Esophagus squamous epithelium (tissue), 5 donors: ENCODE measurements at regions of chr17 and their contacts with region 1.

Region 1: DNA sequence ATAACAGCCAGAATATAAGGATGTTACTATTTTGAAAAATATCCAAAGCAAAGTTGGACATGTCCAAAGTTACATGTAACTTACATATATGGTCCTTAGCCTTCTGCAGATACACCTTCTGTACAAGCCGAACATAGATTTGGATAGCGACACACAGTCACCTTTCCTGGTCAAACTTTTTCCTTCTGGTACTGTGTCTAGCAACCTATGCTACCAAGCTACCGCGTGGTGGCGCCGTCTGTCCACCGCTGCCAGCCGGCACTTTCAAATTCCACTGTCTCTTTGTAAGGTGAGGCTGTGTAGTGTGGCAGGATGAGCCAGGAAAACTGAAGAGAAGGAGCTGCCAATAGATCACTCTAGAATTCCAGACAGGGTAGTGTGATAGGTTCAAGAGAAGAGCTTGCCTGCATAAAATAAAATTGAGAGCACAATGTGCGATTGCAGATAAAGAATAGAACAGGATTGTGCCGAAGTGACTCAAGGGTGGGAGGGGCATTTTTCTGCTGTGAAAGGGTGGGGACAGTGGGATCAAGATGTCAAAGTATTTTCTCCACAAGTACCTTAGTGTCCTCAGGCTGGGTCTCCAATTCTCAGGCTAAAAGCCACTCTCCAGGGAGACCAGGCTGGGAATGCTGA is 366.9 kb downstream of the SLC39A11 start:
- DNase-seq: no peak
- H3K4me3 ChIP-seq: no peak overlapping the region
- H3K27ac ChIP-seq: no peak overlapping the region
- H3K4me1 ChIP-seq: no peaks in the 10 kb centered on the region
- H3K27me3 ChIP-seq: no peaks in the 10 kb centered on the region
- CTCF ChIP-seq: peak; percentile 44 to 88 (median 76)
- POLR2A ChIP-seq: no peak

Region 2: DNA sequence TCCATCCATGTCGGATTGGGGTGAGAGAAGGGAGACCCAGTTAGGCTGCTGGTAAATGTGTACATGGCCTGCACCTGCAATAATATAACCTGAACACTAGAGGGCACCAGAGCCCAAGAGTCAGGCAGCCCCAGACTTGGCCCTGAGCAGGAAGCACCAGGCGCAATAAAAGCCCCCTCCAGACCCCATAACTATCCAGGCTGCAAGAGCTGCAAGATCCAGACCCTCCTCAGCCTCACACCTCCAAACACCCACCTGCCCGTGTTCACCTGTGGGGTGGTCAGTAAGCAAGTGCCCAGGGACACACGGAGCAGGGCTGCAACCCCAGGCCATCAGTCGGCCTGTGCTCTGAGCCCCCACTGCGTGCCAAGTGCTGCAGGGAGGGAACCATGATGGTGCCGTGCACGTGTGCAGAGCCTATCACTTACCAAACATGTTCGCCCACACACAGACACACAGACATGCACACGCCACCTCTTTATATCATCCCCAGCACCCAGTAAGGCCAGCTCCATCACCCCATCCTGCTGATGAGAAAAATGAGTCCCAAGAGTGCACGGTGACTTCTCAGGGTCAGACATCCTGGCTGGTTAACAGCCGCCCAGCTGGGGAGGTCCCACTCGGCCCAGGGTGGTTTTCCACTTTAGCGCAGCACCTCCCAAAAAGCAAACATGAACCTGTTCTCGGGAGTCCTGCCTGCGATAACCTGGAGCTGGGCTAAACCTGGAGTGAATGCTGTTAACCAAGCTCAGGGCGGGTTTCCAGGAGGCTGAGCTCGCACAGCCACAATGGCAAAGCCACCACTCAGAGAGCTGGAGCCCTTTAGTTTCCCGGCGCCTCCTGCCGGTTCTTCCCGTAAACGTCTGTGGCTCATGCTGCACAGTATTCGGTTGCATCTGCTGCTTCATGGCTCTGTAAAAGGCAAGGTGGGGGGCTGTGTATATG is 165.0 kb before region 1 on chr17:
- intact Hi-C with region 1: loop called (anchors 10 kb)
- DNase-seq: no peak
- H3K4me3 ChIP-seq: no peak overlapping the region
- H3K27ac ChIP-seq: peak overlapping the region in 1 of 4 donors; percentile 33
- H3K4me1 ChIP-seq: peaks cover 0 to 23% (median 0%) of the 10 kb centered on the region in 3 donors
- H3K27me3 ChIP-seq: peaks cover 0 to 5% (median 0%) of the 10 kb centered on the region in 4 donors
- CTCF ChIP-seq: peak; percentile 73 to 91 (median 88)
- POLR2A ChIP-seq: no peak